ENCODE measurements at regions of chr13 and their contacts with region 1.

Region 1: DNA sequence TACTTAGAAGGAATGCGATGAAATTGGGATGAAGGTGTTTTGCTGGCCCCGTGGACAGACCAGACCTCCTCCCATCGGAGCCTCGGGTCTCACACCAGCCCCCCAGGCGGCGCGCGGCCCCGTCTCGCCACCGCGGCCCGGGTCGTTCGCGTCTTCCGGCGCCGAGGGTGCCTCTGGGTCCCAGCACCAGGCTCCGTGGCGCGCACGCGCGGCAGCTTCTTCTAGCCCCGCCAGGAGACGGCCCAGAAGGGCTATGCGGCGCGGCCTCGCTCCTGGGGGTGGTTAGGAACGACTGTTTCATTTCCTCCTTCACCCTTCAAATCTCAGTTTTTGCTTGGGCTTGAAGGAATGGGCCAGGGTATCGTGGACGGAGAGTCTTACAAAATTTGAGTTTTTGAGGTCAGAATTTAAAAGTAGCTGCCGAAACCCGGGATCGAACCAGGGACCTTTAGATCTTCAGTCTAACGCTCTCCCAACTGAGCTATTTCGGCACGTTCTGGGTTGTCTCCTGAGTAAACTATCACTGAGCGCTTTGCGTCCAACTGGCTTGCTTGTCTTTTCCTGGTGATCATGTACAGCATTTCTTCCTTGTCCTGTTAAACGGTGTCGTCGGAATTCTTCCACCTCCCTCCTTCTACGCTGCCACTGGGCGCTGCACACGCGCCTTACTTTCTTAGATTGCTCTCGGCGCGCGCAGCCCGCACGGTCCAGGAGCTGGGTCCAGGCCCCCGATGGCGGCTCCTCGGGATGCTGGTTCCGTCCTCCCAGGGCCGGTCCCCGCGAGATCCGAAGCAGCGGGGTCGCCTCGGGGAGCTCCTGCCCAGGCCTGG is 46.5 kb downstream of the TGDS start:
- DNase-seq: peak; percentile 96
- H3K4me3 Mint-ChIP-seq: peak overlapping the region; percentile 82
- H3K27ac Mint-ChIP-seq: peak overlapping the region; percentile 84
- H3K4me1 Mint-ChIP-seq: peaks cover 18% of the 10 kb centered on the region
- H3K27me3 Mint-ChIP-seq: peaks cover 8% of the 10 kb centered on the region

Region 2: GRCh38 chr13:94327318-94327717 is 222.1 kb before region 1 on chr13:
- intact Hi-C with region 1: loop called (anchors 10 kb)
- DNase-seq: peak; percentile 74
- H3K4me3 Mint-ChIP-seq: peak overlapping the region; percentile 62
- H3K27ac Mint-ChIP-seq: peak overlapping the region; percentile 72
- H3K4me1 Mint-ChIP-seq: peaks cover 65% of the 10 kb centered on the region
- H3K27me3 Mint-ChIP-seq: peaks cover 2% of the 10 kb centered on the region

Region 3: GRCh38 chr13:94567581-94567980 is 18.1 kb after region 1 on chr13:
- intact Hi-C with region 1: loop called (anchors 2 kb)
- DNase-seq: no peak
- H3K4me3 Mint-ChIP-seq: no peak overlapping the region
- H3K27ac Mint-ChIP-seq: no peak overlapping the region
- H3K4me1 Mint-ChIP-seq: no peaks in the 10 kb centered on the region
- H3K27me3 Mint-ChIP-seq: no peaks in the 10 kb centered on the region

Region 4: DNA sequence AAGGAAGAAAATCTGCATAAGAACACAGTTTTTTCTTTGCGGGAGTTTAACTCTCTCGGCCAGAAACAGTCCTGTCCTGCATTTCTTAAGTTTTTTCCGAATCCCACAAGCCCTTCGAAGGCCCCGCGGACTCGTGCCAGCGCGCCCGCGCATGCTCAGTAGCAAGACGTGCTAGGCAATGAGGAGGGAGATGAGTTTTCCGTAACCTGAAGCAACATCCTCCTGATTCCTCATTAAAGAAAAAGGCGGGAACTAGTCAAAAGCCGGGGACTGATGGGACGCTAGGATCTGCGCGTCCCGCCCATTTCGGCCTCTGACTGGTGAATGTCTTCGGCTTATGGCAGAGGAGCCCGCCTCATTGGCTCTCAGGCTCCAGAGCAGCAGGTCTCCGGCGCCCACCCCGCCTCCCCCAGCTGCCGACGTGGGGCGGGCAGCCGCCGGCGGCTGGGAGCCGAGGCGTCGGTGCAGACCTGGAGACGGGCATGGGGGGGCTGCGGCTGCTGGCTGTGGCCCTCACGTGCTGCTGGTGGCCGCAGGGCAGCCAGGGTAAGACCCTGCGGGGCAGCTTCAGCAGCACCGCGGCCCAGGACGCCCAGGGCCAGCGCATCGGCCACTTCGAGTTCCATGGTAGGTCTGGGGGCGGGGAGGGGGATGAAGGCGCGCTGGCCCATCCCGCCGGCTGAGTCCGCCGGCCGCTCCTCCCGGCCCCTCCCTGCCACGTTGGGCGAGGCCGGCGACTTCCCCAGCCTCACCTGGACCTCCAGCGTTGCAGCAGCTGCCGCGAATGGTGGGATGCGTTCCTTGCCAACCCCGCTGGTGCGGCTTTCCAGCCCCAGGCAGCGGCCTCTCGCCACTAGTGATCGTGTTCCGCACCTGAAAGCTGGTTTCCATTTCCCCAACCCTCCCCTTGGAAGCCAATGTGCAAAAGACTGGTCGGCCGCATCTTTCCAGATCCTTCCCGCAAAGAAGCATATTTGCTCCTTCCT is 52.3 kb after region 1 on chr13 and contains the start of gene GPR180:
- intact Hi-C with region 1: loop called (anchors 1 kb)
- DNase-seq: peak; percentile 97
- H3K4me3 Mint-ChIP-seq: peak within 1 kb of the TSS; percentile 89
- H3K27ac Mint-ChIP-seq: peak within 1 kb of the TSS; percentile 79
- H3K4me1 Mint-ChIP-seq: peaks cover 27% of the 10 kb centered on the region
- H3K27me3 Mint-ChIP-seq: no peaks in the 10 kb centered on the region
- total RNA-seq, gene GPR180: 9.8 and 10.3 TPM in 2 replicates

Region 5: DNA sequence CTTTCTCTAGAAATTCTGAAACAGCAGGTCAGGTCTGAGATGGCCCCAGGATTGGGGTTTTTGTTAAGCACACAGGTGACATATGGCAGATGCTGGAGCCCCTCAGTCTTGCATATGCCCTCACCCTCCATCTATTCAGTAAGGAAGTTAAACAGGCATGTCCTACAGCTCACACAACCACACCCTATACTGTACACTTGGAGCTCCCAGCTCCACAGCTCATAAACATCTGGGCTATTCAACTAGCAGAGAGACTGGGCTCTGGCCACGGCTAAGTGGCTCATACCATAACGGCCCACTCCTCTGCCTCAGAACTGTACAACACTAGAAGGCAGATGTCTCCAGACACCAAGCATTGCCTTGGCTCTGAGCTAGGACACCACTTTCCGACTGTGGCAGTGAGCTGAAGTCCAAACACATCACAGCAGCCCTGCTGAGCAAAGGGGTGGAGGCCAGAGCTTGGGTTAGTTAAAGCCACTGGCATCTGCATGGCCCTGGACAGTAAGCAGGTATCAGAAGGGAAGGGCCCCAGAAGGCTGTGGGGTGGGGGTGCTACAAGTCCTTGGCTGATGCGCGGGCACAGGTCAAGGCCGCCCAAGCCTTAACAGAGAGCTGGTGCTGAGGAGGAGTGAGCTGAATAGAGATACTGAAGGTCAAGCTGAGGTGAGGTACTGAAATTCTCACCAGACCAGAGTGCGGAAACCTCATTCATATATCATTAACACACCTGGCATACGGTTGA is 672.7 kb after region 1 on chr13:
- intact Hi-C with region 1: no loop called
- DNase-seq: no peak
- H3K4me3 Mint-ChIP-seq: no peak overlapping the region
- H3K27ac Mint-ChIP-seq: no peak overlapping the region
- H3K4me1 Mint-ChIP-seq: peaks cover 3% of the 10 kb centered on the region
- H3K27me3 Mint-ChIP-seq: no peaks in the 10 kb centered on the region

Region 6: GRCh38 chr13:95301183-95301967 is 751.9 kb after region 1 on chr13 and contains the start of gene ABCC4:
- intact Hi-C with region 1: loop called (anchors 10 kb)
- DNase-seq: peak; percentile 90
- H3K4me3 Mint-ChIP-seq: peak within 1 kb of the TSS; percentile 91
- H3K27ac Mint-ChIP-seq: peak within 1 kb of the TSS; percentile 85
- H3K4me1 Mint-ChIP-seq: peaks cover 28% of the 10 kb centered on the region
- H3K27me3 Mint-ChIP-seq: peaks cover 12% of the 10 kb centered on the region
- total RNA-seq, gene ABCC4: 19.6 and 20.9 TPM in 2 replicates